ENCODE measurements at regions of chr1 and their contacts with region 1.

Region 1: DNA sequence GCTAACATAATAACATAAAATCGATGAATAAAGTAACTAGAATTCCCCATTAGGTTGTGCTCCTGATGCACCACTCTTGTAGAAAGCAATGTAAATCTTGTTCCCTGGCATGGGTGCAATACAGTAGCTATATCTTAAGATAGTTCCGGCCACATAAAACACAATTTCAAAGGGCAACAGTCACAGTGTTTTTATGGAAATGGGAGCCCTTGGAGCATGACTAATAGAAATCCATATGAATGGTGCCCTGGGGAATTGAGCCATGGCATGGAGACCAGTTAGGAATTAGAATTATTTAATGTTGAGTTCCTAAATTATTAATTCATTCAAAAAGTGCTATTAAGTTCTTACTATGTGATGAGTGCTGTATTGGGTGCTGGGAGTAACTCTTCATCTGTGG is 118.7 kb downstream of the KCNK2 start:
- DNase-seq: no peak
- H3K4me3 ChIP-seq: no peak overlapping the region
- H3K27ac ChIP-seq: no peak overlapping the region
- H3K4me1 ChIP-seq: no peaks in the 10 kb centered on the region
- H3K27me3 ChIP-seq: no peaks in the 10 kb centered on the region
- CTCF ChIP-seq: no peak
- EP300 ChIP-seq: no peak
- POLR2A ChIP-seq: no peak

Region 2: GRCh38 chr1:213512316-213512715 is 1689.0 kb before region 1 on chr1:
- in situ Hi-C with region 1: no loop called
- intact Hi-C with region 1: loop called (anchors 5 kb)
- DNase-seq: no peak
- H3K4me3 ChIP-seq: no peak overlapping the region
- H3K27ac ChIP-seq: no peak overlapping the region
- H3K4me1 ChIP-seq: no peaks in the 10 kb centered on the region
- H3K27me3 ChIP-seq: no peaks in the 10 kb centered on the region
- CTCF ChIP-seq: no peak
- EP300 ChIP-seq: no peak
- POLR2A ChIP-seq: no peak

Region 3: DNA sequence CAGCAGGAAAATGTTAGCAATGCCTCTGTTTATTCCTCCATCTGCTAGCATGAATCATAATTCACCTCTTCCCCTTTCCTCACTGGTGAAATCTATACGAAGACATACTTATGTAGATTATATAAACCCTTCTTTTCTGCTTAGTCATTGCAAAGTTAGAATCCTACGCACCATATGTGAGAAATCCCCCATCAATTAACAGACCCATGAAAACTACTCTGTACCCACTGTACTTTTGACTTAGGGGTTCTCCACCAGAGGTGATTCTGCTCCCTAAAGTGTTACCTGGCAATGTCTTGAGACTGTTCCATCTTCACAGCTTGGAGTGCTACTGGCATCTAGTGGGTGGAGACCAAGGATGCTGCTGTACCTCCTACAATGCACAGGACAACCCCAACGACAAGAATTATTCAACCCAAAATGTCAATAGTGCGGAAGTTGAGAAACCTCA is 316.2 kb after region 1 on chr1:
- in situ Hi-C with region 1: no loop called
- intact Hi-C with region 1: no loop called
- DNase-seq: no peak
- H3K4me3 ChIP-seq: no peak overlapping the region
- H3K27ac ChIP-seq: no peak overlapping the region
- H3K4me1 ChIP-seq: no peaks in the 10 kb centered on the region
- H3K27me3 ChIP-seq: no peaks in the 10 kb centered on the region
- CTCF ChIP-seq: no peak
- EP300 ChIP-seq: no peak
- POLR2A ChIP-seq: no peak